ENCODE measurements at regions of chr10 and their contacts with region 1.

Region 1: DNA sequence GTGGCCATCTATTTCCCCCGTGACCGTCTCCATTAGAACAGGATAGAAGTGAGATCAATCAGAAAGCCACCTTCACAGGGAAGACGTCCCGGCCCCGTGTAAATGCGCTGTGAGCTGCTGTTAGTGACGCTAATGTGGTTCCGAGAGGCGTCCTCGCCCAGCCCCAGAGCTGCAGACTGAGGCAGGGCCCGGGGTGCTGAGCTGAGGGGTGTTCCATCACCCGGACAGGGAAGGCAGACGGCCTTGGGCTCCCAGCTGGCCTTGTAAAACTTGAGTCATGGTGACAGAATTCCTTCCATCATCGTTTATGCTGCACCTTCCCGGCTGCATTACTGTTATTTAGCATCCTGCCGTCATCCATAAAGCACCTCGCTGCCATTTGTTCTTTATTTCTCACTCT is 195.3 kb upstream of the CTBP2 start:
- DNase-seq: no peak
- H3K4me3 ChIP-seq: no peak overlapping the region
- H3K27ac ChIP-seq: no peak overlapping the region
- H3K4me1 ChIP-seq: no peaks in the 10 kb centered on the region
- H3K27me3 ChIP-seq: no peaks in the 10 kb centered on the region
- CTCF ChIP-seq: no peak
- POLR2A ChIP-seq: no peak

Region 2: GRCh38 chr10:125160856-125161706 is 194.6 kb before region 1 on chr10:
- intact Hi-C with region 1: no loop called
- DNase-seq: peak; percentile 87
- H3K4me3 ChIP-seq: peak overlapping the region; percentile 92 to 96
- H3K27ac ChIP-seq: peak overlapping the region; percentile 96 to 99
- H3K4me1 ChIP-seq: no peaks in the 10 kb centered on the region
- H3K27me3 ChIP-seq: no peaks in the 10 kb centered on the region
- CTCF ChIP-seq: peak in 3 of 4 experiments; percentile 12 to 46 (median 43)
- POLR2A ChIP-seq: peak; percentile 55

Region 3: DNA sequence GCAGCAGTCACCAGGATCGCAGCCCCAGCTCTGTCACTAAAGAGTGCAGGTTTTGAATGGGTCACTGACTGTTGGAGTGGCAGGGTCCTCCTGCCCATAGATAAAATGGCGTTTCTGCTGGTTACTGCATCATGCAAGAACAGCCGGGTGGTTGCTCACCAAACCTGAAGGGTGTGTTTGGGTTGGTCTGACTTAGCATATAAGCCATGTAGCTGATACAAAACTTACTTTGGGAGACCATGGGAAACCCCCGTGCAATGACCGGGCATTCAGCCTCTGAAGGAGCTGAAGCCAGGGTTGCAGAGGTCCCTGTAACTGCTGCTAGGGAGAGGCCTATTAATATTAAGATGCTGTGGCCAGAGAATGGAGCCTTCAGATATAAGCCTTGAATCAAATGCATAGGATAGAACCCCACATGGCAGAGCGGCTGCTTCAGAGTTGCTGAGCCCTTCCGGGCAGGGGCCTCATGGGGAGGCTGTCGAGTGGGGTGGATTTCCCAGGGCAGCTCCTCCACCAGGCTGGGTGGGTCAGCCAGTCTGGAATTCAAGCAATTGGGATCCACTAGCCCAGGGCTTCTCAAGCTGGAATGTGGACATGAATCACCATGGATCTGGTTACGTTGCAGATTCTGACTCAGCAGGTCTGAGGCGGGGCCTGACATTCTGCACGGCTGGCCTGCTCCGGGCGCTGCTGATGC is 124.4 kb before region 1 on chr10:
- intact Hi-C with region 1: no loop called
- DNase-seq: no peak
- H3K4me3 ChIP-seq: no peak overlapping the region
- H3K27ac ChIP-seq: no peak overlapping the region
- H3K4me1 ChIP-seq: no peaks in the 10 kb centered on the region
- H3K27me3 ChIP-seq: no peaks in the 10 kb centered on the region
- CTCF ChIP-seq: no peak
- POLR2A ChIP-seq: no peak

Region 4: DNA sequence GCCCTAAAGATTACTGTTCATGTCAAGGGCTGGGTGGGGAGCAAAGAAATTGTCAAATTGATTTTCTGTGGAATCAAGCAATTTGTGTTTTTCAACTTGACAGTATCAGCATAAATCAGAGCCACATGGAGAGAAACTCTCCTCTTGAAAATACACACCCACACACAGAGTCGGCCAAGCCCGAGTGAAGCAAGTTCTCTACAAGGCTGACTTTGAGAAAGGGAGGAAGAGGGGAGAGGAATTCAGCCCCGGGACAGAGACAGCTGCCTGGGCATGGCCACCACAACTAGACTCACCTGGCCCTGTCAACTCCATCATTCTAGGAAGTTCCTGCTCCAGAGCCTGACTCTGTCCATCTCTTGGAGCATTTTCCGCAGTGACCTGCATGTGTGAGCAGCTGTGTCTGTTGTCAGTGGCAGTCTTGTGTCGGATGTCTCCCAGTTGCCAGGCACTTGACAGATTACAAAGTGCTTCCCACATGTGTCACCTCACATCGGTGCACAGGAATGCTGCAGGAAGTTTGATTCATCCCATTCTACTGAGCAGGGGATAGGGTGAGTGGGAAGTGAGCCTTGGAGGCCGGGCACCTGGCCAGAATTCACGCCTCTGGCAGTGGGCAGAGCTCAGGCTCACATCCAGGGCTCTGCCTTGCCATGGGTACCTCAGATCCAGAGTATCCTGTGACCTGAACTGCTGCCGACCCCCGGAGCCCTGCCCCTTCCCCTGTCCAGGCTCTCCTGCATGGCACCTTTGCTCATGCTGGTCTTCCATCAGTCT is 994.7 kb after region 1 on chr10:
- intact Hi-C with region 1: loop called (anchors 10 kb)
- DNase-seq: no peak
- H3K4me3 ChIP-seq: no peak overlapping the region
- H3K27ac ChIP-seq: no peak overlapping the region
- H3K4me1 ChIP-seq: no peaks in the 10 kb centered on the region
- H3K27me3 ChIP-seq: no peaks in the 10 kb centered on the region
- CTCF ChIP-seq: no peak
- POLR2A ChIP-seq: no peak